ENCODE measurements at regions of chr16 and their contacts with region 1.

Region 1: GRCh38 chr16:64089697-64090096 is 1032.2 kb downstream of the CDH11 start:
- DNase-seq: peak in 1 of 2 donors; percentile 8
- ATAC-seq: peak in 2 of 8 donors; percentile 24 to 61
- H3K4me3 ChIP-seq: no peak overlapping the region
- H3K27ac ChIP-seq: no peak overlapping the region
- H3K4me1 ChIP-seq: no peaks in the 10 kb centered on the region
- H3K27me3 ChIP-seq: no peaks in the 10 kb centered on the region
- CTCF ChIP-seq: peak; percentile 31 to 75 (median 55)

Region 2: DNA sequence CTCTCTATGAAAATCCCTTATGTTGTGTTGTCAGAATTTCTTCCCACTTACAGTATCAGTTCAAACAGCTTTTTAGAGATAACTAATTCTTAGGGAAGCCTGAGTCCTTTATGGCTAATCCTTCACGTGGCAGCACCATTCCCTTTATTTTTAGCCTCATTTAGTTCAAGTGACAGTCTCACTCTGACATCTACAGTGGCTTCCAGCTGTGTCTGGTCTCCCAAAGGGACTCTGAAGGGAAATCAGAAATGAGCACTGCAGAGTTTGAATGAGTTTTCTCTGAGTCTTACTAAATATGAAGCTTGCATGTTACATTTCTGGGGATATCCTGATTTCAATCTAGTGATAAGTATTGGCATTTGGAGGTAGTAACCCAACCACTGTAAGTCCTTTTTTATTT is 71.9 kb before region 1 on chr16:
- intact Hi-C with region 1: no loop called
- DNase-seq: no peak
- ATAC-seq: no peak
- H3K4me3 ChIP-seq: no peak overlapping the region
- H3K27ac ChIP-seq: no peak overlapping the region
- H3K4me1 ChIP-seq: peaks cover 0 to 5% (median 0%) of the 10 kb centered on the region in 9 donors
- H3K27me3 ChIP-seq: no peaks in the 10 kb centered on the region
- CTCF ChIP-seq: no peak

Region 3: GRCh38 chr16:64159976-64160375 is 70.3 kb after region 1 on chr16:
- intact Hi-C with region 1: no loop called
- DNase-seq: no peak
- ATAC-seq: no peak
- H3K4me3 ChIP-seq: no peak overlapping the region
- H3K27ac ChIP-seq: no peak overlapping the region
- H3K4me1 ChIP-seq: peaks cover 0 to 11% (median 0%) of the 10 kb centered on the region in 9 donors
- H3K27me3 ChIP-seq: no peaks in the 10 kb centered on the region
- CTCF ChIP-seq: no peak

Region 4: GRCh38 chr16:64174327-64174726 is 84.6 kb after region 1 on chr16:
- intact Hi-C with region 1: no loop called
- DNase-seq: no peak
- ATAC-seq: no peak
- H3K4me3 ChIP-seq: no peak overlapping the region
- H3K27ac ChIP-seq: no peak overlapping the region
- H3K4me1 ChIP-seq: no peaks in the 10 kb centered on the region
- H3K27me3 ChIP-seq: no peaks in the 10 kb centered on the region
- CTCF ChIP-seq: no peak

Region 5: DNA sequence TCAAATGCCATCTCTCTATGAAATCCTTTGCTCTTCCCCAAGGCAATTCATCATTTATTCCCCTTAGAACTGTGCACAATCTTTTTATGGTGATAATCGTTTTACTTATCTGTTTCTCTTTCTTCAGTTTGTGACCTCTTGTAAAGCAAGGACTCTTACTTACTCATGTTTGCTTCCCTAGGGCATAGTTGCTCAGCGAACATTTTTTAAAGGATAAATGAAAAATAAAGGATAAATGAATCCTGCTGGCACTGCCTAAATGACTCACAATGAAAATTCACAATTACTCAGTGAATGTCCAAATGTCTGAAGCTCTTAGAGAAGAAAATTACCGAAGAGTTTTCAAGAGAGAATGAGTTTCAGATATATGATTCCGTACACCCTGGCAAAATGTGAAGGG is 360.5 kb after region 1 on chr16:
- intact Hi-C with region 1: loop called in 8 of 10 experiments (anchors 5 to 10 kb)
- DNase-seq: no peak
- ATAC-seq: no peak
- H3K4me3 ChIP-seq: no peak overlapping the region
- H3K27ac ChIP-seq: no peak overlapping the region
- H3K4me1 ChIP-seq: peaks cover 0 to 10% (median 0%) of the 10 kb centered on the region in 9 donors
- H3K27me3 ChIP-seq: no peaks in the 10 kb centered on the region
- CTCF ChIP-seq: no peak

Region 6: DNA sequence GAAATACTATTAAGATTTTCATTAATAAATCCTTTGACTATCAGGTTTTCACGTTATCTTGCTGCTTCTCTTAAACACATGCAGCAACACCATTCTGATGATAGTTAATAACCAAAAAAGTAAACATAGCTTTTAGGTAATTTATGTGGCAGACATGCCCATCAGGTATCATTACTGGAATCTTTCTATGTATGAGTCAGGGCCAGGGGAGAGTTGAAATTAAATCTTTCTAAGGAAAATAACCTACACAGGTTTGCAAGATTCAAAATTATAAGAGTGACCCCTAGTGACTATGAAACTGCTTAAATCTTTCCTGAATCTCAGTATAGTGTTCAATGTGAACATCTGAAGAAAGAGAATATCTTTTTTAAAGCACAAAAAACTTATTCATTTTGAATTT is 365.6 kb after region 1 on chr16:
- intact Hi-C with region 1: loop called in 9 of 10 experiments (anchors 5 to 10 kb)
- DNase-seq: no peak
- ATAC-seq: no peak
- H3K4me3 ChIP-seq: no peak overlapping the region
- H3K27ac ChIP-seq: no peak overlapping the region
- H3K4me1 ChIP-seq: peaks cover 0 to 6% (median 0%) of the 10 kb centered on the region in 9 donors
- H3K27me3 ChIP-seq: no peaks in the 10 kb centered on the region
- CTCF ChIP-seq: peak in 7 of 9 donors; percentile 10 to 60 (median 43)

Region 7: DNA sequence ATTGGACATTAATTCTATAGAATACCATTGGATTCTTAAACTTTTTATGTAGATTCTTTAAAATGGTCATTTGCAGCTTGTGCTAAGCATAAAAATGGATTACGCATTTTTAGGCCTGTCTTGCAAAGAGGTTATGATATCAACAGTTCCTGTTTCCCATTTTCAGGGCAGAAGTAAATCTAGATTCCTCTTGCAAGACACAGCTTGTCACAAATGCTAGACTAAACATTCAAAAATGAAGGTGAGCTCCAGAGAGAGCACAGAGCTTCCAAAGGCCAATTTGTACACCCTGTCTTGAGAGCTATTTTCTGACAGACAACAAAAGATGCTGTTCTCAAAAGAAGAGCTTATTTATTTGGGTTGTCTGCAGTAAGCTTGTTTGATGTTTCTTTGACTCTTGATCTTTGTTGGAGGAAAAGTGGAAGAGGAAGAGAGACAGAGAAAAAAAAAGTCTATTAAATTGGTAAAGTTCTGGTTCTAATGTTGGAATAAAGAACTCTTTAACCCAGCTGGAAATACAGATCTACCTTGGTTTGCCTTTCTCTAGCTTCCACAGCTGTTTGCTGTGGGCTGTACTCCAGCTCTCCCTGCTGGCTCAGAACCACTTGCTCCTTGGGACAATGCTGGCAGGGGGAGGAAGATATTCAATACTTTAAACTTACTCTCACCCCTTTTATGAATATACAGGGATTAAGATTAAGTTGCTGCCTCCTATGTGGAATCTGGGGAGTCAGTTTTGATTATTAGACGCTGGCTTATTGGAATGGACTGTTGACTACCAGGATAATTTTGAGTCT is 380.4 kb after region 1 on chr16:
- intact Hi-C with region 1: loop called in 1 of 10 experiments (anchors 10 kb)
- DNase-seq: peak in 1 of 2 donors; percentile 17
- ATAC-seq: peak in 2 of 8 donors; percentile 53 to 73
- H3K4me3 ChIP-seq: no peak overlapping the region
- H3K27ac ChIP-seq: no peak overlapping the region
- H3K4me1 ChIP-seq: peaks cover 0 to 9% (median 5%) of the 10 kb centered on the region in 9 donors
- H3K27me3 ChIP-seq: no peaks in the 10 kb centered on the region
- CTCF ChIP-seq: peak in 6 of 9 donors; percentile 7 to 54 (median 36)